ENCODE measurements at regions of chr5 and their contacts with region 1.

Region 1: DNA sequence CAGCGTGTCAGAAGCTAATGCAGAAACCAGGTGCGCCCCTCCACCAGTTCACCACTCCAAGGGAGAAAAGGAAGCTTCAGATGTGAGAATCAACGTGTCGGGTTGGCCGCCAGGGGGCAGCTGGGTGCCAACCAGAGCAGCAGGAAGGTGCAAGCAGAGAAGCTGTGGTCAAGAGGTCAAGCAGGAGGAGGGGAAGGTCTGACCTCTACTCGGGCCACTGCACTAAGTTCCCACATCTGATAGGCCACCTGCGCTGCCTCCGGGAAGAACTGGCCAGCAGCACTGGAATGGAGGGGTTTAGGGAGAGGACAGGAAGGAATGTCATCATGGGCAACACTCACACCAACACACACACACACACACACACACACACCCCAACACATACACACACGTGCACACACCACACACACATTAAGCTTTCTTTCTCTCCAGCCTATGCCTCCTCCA is 31.4 kb downstream of the ANXA6 start:
- DNase-seq: peak; percentile 65 to 79
- ATAC-seq: peak; percentile 34 to 70 (median 60)
- H3K4me3 ChIP-seq: no peak overlapping the region
- H3K27ac ChIP-seq: peak overlapping the region in 2 of 10 donors; percentile 28 to 58
- H3K4me1 ChIP-seq: peaks cover 9 to 34% (median 16%) of the 10 kb centered on the region in 9 donors
- H3K27me3 ChIP-seq: no peaks in the 10 kb centered on the region
- CTCF ChIP-seq: peak; percentile 64 to 90 (median 84)

Region 2: DNA sequence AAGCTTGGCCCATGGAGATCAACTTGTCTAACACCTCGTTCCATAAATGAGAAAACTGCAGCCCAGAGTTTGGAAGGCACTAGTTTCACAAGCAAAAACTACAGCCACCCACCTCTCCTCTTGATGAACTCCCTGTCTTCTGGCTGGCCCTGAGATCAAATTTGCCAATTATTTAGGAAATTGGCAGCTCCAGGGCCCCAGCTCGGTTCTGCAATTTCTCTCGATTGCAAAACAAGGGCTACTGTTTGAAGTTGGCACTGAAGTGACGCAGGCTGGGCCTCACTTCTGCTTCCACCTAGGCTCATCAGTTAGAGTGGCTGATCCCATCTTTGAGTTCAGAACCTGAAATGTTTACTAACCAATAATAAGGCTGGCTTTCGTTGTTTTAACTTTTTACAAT is 109.5 kb before region 1 on chr5:
- intact Hi-C with region 1: no loop called
- DNase-seq: no peak
- ATAC-seq: no peak
- H3K4me3 ChIP-seq: no peak overlapping the region
- H3K27ac ChIP-seq: peak overlapping the region in 1 of 10 donors; percentile 62
- H3K4me1 ChIP-seq: peaks cover 3 to 65% (median 19%) of the 10 kb centered on the region in 9 donors
- H3K27me3 ChIP-seq: no peaks in the 10 kb centered on the region
- CTCF ChIP-seq: no peak

Region 3: DNA sequence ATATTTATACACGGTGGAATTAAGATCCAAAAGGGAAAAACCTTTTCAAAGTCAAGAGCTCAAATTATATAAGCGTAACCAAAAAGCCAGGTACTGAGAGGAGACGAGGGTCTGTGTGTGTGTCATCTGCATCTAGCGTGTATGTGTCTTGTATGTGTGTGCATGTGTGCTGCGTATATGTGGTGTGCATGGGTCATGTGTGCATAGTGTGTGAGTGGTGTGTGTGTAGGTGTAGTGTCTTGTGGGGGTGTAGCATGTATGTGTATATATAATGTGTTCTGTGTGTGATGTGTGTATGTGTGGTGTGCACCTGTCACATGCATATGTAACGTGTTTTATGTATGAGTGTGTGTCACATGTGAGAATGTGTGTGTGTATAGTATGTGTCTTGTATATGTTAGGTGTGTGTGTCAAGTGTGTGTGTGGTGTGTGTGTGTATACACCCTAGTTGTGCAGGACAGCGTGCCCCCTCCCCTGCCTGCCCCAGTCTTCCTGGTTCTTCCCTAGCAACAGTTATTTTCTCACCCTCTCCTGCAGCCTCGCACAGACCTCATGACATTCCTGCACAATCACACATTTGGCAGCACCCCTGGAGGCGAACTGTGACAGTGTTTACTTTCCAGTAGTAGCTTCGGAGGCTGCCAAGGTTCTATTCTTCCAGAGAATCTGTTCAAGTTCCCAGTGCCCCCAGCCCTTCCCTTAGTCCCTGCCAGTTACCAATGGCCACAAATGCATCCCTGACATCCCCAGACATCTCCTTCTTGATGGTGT is 18.3 kb before region 1 on chr5:
- intact Hi-C with region 1: no loop called
- DNase-seq: peak in 1 of 2 donors; percentile 73
- ATAC-seq: peak; percentile 66 to 91 (median 80)
- H3K4me3 ChIP-seq: no peak overlapping the region
- H3K27ac ChIP-seq: peak overlapping the region; percentile 61 to 85 (median 74)
- H3K4me1 ChIP-seq: peaks cover 9 to 58% (median 33%) of the 10 kb centered on the region in 9 donors
- H3K27me3 ChIP-seq: no peaks in the 10 kb centered on the region
- CTCF ChIP-seq: peak in 4 of 9 donors; percentile 2 to 19 (median 14)

Region 4: GRCh38 chr5:151164686-151165392 is 38.6 kb after region 1 on chr5:
- intact Hi-C with region 1: loop called (anchors 1 to 5 kb)
- DNase-seq: peak; percentile 61 to 84
- ATAC-seq: peak; percentile 82 to 94 (median 91)
- H3K4me3 ChIP-seq: no peak overlapping the region
- H3K27ac ChIP-seq: peak overlapping the region in 3 of 10 donors; percentile 3 to 12 (median 9)
- H3K4me1 ChIP-seq: peaks cover 3 to 21% (median 13%) of the 10 kb centered on the region in 9 donors
- H3K27me3 ChIP-seq: no peaks in the 10 kb centered on the region
- CTCF ChIP-seq: peak; percentile 79 to 99 (median 90)

Region 5: DNA sequence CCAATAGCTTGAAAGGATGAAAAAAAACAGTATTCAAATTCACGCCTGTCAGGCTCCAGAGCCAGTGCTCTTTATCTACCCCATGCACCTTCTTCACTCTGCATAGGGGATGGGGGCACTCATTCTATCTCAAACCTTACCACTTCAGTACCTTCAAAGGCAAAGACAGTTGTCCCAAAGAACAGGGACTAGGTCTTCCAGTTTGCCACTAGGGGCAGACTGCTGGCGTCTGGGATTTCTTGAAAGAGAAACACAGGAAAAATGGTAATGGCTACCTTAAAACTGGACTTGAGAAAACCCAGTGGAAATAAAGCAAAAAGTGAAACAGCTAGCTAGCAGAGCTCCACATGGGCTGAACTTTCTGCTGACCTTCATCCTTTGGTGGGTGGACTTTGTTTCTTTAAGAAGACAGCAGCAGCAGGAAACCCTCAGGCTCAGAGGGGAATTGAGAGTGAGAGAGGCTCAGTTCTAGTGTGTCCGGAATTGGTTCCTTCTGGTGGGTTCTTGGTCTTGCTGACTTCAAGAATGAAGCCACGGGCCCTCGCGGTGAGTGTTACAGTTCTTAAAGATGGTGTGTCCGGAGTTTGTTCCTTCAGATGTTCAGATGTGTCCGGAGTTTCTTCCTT is 280.2 kb after region 1 on chr5:
- intact Hi-C with region 1: no loop called
- DNase-seq: no peak
- ATAC-seq: no peak
- H3K4me3 ChIP-seq: no peak overlapping the region
- H3K27ac ChIP-seq: no peak overlapping the region
- H3K4me1 ChIP-seq: peaks cover 0 to 11% (median 0%) of the 10 kb centered on the region in 9 donors
- H3K27me3 ChIP-seq: peaks cover 0 to 13% (median 3%) of the 10 kb centered on the region in 7 donors
- CTCF ChIP-seq: peak in 7 of 9 donors; percentile 32 to 57 (median 45)

Region 6: DNA sequence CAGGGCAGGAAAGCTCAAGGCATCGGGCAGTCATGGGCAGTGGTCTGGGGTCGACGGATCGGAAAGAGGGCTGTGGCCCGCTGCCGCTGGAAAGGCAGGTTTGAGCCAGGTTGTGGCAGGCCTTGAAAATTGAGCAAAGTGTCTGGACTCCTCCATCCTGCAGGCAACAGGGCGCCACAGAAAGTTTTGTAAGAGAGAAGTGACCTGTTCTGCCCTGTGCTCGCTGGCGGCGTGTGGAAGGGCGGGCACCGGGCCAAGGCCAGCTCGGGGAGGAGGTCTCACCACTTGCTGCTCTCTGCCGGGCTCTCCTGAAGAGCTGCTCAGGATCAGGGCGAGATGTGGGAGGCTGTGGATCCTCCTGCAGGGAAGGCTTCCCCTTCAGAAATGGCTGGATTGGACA is 506.3 kb after region 1 on chr5:
- intact Hi-C with region 1: no loop called
- DNase-seq: peak; percentile 35 to 73
- ATAC-seq: peak; percentile 60 to 80 (median 74)
- H3K4me3 ChIP-seq: no peak overlapping the region
- H3K27ac ChIP-seq: peak overlapping the region in 1 of 10 donors; percentile 14
- H3K4me1 ChIP-seq: peaks cover 2 to 29% (median 11%) of the 10 kb centered on the region in 9 donors
- H3K27me3 ChIP-seq: peaks cover 0 to 3% (median 0%) of the 10 kb centered on the region in 7 donors
- CTCF ChIP-seq: no peak

Measured in heart right ventricle (tissue), 16 donors.